Endothelial cell of umbilical vein (primary cell): ENCODE measurements at regions of chr1 and their contacts with region 1.

Region 1: GRCh38 chr1:162056043-162056442 is 13.4 kb upstream of the NOS1AP start:
- DNase-seq: peak; percentile 83
- H3K4me3 ChIP-seq: no peak overlapping the region
- H3K27ac ChIP-seq: no peak overlapping the region
- H3K4me1 ChIP-seq: peaks cover 13% of the 10 kb centered on the region
- H3K27me3 ChIP-seq: no peaks in the 10 kb centered on the region
- CTCF ChIP-seq: peak; percentile 86 to 88
- POLR2A ChIP-seq: no peak

Region 2: DNA sequence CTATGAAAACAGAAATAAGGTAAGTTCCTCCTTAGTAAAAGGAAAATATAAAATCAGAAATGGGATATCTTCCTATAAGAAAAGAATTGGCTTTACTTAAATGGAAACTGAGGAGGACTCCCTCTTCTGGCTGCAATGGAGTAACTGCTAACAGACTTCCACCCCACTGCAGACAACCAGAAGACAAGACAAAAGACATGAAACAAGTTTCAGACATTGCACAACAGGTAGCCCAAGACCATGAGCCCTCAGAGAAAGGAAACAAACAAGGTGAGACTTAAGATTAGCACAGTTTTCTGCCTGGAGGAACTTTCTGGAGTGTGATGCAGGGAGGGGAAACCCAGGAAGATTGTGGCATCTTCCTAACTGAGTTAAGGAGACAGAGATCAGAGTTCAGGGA is 15.4 kb before region 1 on chr1:
- CTCF ChIA-PET with region 1: interaction called, 15 read pairs
- POLR2A ChIA-PET with region 1: no interaction called
- dilution Hi-C with region 1: no loop called
- intact Hi-C with region 1: loop called (anchors 2 kb)
- DNase-seq: peak; percentile 40
- H3K4me3 ChIP-seq: no peak overlapping the region
- H3K27ac ChIP-seq: no peak overlapping the region
- H3K4me1 ChIP-seq: peaks cover under 1% of the 10 kb centered on the region
- H3K27me3 ChIP-seq: peaks cover 0 to 2% of the 10 kb centered on the region in 2 experiments
- CTCF ChIP-seq: peak; percentile 45 to 65
- POLR2A ChIP-seq: no peak

Region 3: DNA sequence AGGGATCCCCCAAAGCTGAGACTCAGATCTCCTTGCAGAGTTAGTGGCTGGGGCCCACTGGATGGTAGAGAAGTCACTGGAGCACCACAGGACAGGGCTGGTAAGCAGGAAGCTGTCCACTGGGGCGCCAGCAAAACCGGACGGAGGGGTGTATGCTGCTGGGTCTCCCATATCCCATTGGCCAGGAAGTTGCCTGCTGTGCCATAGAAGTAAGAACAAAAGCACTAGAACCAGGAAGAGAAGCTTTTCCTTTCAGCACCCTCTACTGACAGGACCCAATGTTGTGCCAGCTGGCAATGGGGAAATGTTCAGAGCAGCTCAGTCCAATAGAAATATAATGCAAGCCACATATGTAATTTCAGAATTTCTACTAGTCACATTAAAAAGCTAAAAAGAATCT is 174.1 kb after region 1 on chr1:
- CTCF ChIA-PET with region 1: interaction called, 42 read pairs
- POLR2A ChIA-PET with region 1: no interaction called
- dilution Hi-C with region 1: no loop called
- intact Hi-C with region 1: loop called (anchors 1 kb)
- DNase-seq: peak; percentile 72
- H3K4me3 ChIP-seq: no peak overlapping the region
- H3K27ac ChIP-seq: no peak overlapping the region
- H3K4me1 ChIP-seq: peaks cover 3% of the 10 kb centered on the region
- H3K27me3 ChIP-seq: no peaks in the 10 kb centered on the region
- CTCF ChIP-seq: peak in 1 of 2 donors; percentile 39
- POLR2A ChIP-seq: no peak

Region 4: DNA sequence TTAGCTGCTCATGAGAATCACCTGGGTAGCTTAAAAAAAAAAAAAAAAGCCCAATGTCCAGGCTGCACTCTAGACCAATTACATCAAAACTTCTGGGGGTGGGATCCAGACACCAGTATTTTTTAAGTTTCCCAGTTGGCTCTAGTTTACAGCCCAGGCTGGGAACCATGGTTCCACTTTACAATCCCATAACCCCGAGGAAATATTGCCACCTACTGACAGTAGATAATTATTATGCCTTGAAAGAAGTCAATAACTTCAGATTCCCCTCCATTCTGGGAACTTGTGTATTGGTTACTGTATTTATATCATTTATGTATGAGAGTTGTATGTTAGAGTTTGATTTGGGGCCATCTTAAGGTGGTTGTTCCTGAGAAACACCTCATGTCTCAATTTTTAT is 220.4 kb after region 1 on chr1:
- CTCF ChIA-PET with region 1: interaction called, 85 read pairs
- POLR2A ChIA-PET with region 1: no interaction called
- dilution Hi-C with region 1: no loop called
- intact Hi-C with region 1: loop called (anchors 1 kb)
- DNase-seq: peak; percentile 51
- H3K4me3 ChIP-seq: no peak overlapping the region
- H3K27ac ChIP-seq: no peak overlapping the region
- H3K4me1 ChIP-seq: no peaks in the 10 kb centered on the region
- H3K27me3 ChIP-seq: no peaks in the 10 kb centered on the region
- CTCF ChIP-seq: peak; percentile 10 to 22
- POLR2A ChIP-seq: no peak

Region 5: DNA sequence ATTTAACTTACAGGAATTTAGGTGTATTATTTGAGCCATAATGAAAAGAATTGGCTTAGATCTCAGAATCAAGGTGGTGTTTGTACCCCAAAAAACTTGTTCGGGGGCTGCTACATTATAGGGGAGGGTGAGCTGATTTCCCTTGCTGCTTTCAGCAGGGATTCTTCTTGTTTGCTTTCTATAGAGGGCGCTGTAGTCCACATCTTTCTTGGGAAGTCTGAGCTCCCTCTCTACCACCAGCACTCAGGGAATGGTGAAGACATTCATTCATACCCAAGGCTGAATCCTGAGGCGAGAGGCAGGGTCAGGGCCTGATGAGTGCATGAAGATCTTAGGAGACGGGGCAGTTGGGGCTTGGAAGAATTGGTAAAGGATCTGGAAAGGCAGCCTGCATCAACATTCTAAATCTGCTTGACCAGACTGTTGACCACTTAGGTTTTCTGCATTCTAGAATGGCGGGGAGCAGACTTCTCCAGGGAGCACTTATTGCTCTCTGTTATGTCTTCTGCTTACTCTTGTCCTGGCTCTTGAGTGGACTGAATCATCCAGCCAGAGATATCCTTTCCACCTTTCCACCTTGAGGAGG is 301.7 kb after region 1 on chr1:
- CTCF ChIA-PET with region 1: interaction called, 16 read pairs
- POLR2A ChIA-PET with region 1: no interaction called
- dilution Hi-C with region 1: no loop called
- intact Hi-C with region 1: no loop called
- DNase-seq: peak; percentile 22
- H3K4me3 ChIP-seq: no peak overlapping the region
- H3K27ac ChIP-seq: no peak overlapping the region
- H3K4me1 ChIP-seq: peaks cover 7% of the 10 kb centered on the region
- H3K27me3 ChIP-seq: no peaks in the 10 kb centered on the region
- CTCF ChIP-seq: peak; percentile 39 to 52
- POLR2A ChIP-seq: no peak

Region 6: GRCh38 chr1:162497723-162498500 is 441.9 kb after region 1 on chr1 and contains the start of gene UHMK1:
- CTCF ChIA-PET with region 1: no interaction called
- POLR2A ChIA-PET with region 1: no interaction called
- dilution Hi-C with region 1: no loop called
- intact Hi-C with region 1: loop called (anchors 5 kb)
- DNase-seq: peak; percentile 92
- H3K4me3 ChIP-seq: peak within 1 kb of the TSS; percentile 47 to 96 (median 78)
- H3K27ac ChIP-seq: peak within 1 kb of the TSS; percentile 73
- H3K4me1 ChIP-seq: peaks cover 14% of the 10 kb centered on the region
- H3K27me3 ChIP-seq: no peaks in the 10 kb centered on the region
- CTCF ChIP-seq: no peak
- POLR2A ChIP-seq: peak; percentile 94
- total RNA-seq, gene UHMK1: 35.0 and 35.1 TPM in 2 replicates

Region 7: DNA sequence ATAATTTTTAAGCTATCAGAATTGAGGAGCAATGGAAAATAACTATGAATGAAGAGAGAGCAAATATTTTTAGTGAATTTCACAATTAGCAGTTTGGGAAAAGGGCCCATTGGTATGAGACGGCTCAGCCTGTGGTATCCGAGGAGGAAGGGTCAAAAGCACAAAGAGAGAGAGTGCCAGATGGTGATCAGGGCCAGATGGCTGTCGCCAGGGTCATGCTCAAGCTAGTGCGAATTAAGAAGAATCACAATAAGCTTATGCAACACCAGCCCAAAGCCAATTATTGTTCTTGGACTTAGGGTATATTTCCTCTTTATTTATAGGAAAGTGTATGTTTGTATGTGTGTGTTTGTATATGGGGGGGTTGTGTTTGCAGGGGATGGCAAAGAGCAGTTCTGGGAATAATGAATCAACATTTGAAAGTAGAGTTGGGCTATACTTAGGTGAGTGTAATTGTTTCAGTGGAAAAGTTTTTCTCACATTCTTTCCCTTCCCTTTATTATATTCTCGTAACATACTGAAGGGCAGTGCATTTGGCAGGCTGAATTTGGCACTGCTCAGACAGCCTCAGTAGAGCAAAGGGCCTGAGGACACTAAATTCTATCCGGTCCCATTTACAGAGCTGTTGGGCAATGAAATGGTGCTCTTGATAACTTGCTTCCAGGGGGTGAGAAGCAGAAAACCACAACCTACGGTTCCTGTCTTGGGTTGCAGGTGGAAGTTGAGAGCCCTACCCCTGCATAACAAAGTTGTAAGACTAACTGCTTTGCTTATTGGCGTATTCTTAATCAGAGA is 556.8 kb after region 1 on chr1:
- CTCF ChIA-PET with region 1: interaction called, 4 read pairs
- POLR2A ChIA-PET with region 1: no interaction called
- dilution Hi-C with region 1: no loop called
- intact Hi-C with region 1: loop called (anchors 5 kb)
- DNase-seq: peak; percentile 33
- H3K4me3 ChIP-seq: no peak overlapping the region
- H3K27ac ChIP-seq: no peak overlapping the region
- H3K4me1 ChIP-seq: no peaks in the 10 kb centered on the region
- H3K27me3 ChIP-seq: no peaks in the 10 kb centered on the region
- CTCF ChIP-seq: no peak
- POLR2A ChIP-seq: no peak